Right ventricle myocardium superior (tissue), 1 donor: ENCODE measurements at regions of chr17 and their contacts with region 1.

Region 1: DNA sequence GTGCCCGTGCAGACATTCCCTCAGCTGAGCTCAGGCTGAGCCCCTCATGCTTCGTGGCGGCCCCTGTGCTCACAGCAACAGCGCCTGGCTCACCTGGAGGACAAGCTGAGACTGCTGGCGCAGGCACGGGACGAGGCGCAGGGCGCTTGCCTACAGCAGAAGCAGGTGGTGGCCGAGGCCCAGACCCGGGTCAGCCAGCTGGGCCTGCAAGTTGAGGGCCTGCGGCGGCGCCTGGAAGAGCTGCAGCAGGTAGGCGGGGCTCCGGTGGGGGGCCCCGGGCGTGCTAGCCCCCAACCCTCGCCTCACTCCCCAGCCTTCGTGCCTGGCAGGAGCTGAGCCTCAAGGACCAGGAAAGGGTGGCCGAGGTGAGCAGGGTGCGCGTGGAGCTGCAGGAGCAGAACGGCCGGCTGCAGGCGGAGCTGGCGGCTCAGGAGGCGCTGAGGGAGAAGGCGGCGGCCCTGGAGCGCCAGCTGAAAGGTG is 1.4 kb upstream of the RAC3 start:
- DNase-seq: no peak
- ATAC-seq: peak; percentile 1

Region 2: DNA sequence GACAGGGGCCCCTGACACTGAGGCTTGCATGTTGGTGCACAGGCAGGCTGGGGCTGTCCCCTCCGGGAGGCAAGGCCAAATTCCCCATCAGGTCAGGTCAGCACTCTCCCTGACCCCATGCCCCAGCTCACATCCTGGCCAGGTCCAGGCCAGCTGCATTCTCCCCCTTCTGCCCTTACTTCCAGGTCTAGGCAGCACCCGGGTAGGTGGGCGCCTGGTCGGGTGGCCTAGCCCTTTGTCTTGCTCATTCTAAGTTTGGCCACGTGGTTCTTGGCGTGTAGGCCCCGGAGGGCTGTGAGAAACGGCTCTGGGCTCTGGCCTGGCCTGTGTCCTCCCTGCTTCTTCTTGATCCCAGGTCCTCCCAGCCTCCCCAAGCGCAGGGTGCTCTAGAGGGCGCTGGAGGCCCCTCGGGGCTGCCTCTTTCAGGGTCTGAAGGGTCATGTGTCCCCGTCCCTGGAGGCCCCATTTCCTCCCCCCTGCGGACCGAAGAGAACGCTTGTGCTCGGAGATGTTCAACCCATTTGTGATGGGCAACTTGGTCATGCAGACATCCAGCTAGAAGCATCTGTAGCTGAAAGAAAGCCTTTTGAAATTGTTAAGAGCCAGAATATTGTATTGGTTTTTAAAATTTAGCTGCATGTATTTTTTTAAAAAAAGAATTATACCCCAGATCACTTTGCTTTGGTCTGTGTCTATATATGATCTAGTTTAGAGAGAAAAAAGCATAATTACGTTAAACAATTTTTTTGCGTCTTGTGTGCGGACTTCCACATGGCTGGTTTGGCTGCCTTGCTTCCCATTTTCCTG is 628.1 kb before region 1 on chr17:
- intact Hi-C with region 1: no loop called
- DNase-seq: peak; percentile 75
- ATAC-seq: no peak

Region 3: DNA sequence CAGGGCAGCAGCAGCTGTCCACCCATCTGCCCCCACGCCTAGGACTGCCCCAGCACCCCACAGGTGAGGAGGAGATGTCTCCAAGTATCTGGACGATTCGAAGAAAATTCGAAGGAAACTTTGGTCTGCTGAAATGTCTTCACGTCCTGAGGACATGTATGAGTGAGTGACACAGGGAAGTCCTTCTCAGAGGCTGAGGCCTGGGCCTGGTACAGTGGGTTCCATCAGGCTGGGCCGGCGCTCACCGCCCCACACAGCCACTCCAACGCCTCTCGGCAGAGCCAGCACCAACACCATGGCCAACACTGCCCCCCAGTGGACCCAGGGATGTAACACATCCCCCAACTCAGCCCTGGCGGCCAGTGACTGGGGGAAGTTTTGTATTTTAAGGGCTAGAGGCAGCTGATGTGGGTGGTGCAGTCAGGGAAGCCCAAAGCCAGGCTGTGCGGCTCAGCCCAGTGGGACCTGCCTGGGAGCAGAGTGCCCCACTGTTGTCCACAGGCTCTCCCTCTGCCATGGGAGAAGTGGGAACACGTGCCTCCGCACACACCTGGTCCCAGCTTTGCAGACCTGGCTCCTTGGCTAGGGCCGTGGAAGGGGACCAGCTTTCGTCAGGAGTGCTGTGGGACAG is 123.8 kb after region 1 on chr17:
- intact Hi-C with region 1: loop called (anchors 2 kb)
- DNase-seq: peak; percentile 88
- ATAC-seq: peak; percentile 96

Region 4: GRCh38 chr17:82273327-82274133 is 243.5 kb after region 1 on chr17 and contains the start of gene CSNK1D:
- intact Hi-C with region 1: no loop called
- DNase-seq: peak; percentile 96
- ATAC-seq: peak; percentile 97
- total RNA-seq, gene CSNK1D: 54.4 TPM